ENCODE measurements at regions of chr16 and their contacts with region 1.

Region 1: DNA sequence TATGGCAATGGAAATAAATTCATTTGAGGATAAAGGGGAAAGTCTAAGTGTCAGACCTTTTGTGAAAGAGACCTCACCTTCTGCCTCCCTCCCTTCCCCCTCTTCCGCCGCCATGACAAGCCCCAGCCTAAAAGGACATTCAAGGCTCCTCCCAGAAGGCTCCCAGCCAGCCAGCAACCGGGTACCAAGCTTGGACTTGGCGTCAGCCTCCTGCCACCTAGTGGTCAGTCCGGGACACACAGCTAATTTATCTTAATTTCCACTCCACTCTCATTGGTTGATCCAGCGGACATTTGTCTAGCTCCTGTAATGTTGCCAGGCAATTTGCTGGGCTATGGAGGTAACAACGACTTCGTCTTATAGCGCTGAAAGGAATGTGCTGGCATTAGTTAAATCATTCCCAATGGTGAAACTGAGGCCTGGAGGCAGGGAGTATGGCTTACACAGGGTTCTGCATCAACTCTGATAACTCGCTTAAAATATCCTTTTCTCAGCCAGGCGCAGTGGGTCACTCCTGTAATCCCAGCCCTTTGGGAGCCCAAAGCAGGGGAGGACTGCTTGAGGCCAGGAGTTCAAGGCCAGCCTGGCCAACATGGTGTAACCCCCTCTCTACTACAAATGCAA is 19.3 kb upstream of the CLEC3A start:
- DNase-seq: peak; percentile 84 to 87
- H3K4me3 ChIP-seq: no peak overlapping the region
- H3K4me3 Mint-ChIP-seq: no peak overlapping the region
- H3K27ac Mint-ChIP-seq: no peak overlapping the region
- H3K4me1 ChIP-seq: no peaks in the 10 kb centered on the region
- H3K4me1 Mint-ChIP-seq: no peaks in the 10 kb centered on the region
- H3K27me3 ChIP-seq: no peaks in the 10 kb centered on the region
- H3K27me3 Mint-ChIP-seq: no peaks in the 10 kb centered on the region
- CTCF ChIP-seq: peak; percentile 75 to 84

Region 2: DNA sequence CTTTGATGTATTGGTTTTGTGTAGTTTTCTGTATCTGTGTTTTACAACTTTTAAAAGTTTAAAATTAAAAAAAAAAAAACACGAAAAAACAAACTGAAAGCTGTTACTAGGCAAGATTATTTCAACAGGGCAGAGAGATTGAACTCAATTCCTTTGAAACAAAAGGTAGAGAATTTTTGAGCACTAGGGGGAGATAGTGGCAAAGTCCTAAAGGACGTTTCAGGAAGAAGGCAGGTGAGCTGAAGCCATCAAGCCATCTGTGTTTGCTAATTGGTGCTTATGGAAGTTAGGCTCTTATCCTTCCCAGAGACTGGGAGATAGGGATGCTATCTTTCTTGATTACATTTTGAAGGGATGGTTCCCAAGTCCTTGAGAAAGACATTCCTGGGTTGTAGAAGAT is 51.3 kb before region 1 on chr16:
- CTCF ChIA-PET with region 1: interaction called, 8 read pairs
- POLR2A ChIA-PET with region 1: no interaction called
- intact Hi-C with region 1: loop called (anchors 1 kb)
- DNase-seq: peak in 1 of 2 experiments; percentile 65
- H3K4me3 ChIP-seq: no peak overlapping the region
- H3K4me3 Mint-ChIP-seq: no peak overlapping the region
- H3K27ac Mint-ChIP-seq: no peak overlapping the region
- H3K4me1 ChIP-seq: no peaks in the 10 kb centered on the region
- H3K4me1 Mint-ChIP-seq: no peaks in the 10 kb centered on the region
- H3K27me3 ChIP-seq: no peaks in the 10 kb centered on the region
- H3K27me3 Mint-ChIP-seq: peaks cover 20% of the 10 kb centered on the region
- CTCF ChIP-seq: peak; percentile 47 to 74

Measured in Caco-2 (cell line).